Natural killer cell (primary cell): ENCODE measurements at regions of chr15 and their contacts with region 1.

Region 1: GRCh38 chr15:56886932-56887781 is 31.3 kb upstream of the TCF12 start:
- DNase-seq: peak; percentile 71 to 92
- ATAC-seq: peak; percentile 85 to 89 (median 89)
- H3K4me3 ChIP-seq: peak overlapping the region; percentile 85
- H3K4me3 Mint-ChIP-seq: peak overlapping the region; percentile 92
- H3K27ac ChIP-seq: peak overlapping the region; percentile 89
- H3K27ac Mint-ChIP-seq: peak overlapping the region; percentile 91 to 94
- H3K4me1 ChIP-seq: peaks cover 9% of the 10 kb centered on the region
- H3K4me1 Mint-ChIP-seq: peaks cover 15 to 22% of the 10 kb centered on the region in 2 donors
- H3K27me3 ChIP-seq: no peaks in the 10 kb centered on the region
- H3K27me3 Mint-ChIP-seq: no peaks in the 10 kb centered on the region
- CTCF ChIP-seq: no peak

Region 2: DNA sequence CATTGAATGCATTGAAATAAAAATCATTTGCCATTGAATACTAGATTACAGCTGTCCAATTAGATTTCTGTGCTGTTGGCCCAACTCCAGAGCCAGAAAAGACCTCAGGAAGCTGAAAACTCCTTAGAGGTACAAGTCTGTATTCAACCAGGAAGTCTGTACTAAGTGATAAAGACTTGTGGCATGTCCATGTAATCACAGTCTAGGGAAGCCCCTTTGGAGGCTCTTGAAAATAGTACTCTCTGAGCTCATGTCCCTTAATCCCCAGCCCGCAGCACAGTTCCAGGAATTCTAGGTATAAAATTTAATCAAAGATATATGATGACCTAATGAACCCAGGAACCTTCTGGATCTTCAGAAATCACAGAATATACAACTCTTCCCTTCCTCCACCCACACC is 1969.8 kb before region 1 on chr15:
- intact Hi-C with region 1: no loop called
- DNase-seq: no peak
- ATAC-seq: no peak
- H3K4me3 ChIP-seq: no peak overlapping the region
- H3K4me3 Mint-ChIP-seq: no peak overlapping the region
- H3K27ac ChIP-seq: no peak overlapping the region
- H3K27ac Mint-ChIP-seq: no peak overlapping the region
- H3K4me1 ChIP-seq: no peaks in the 10 kb centered on the region
- H3K4me1 Mint-ChIP-seq: no peaks in the 10 kb centered on the region
- H3K27me3 ChIP-seq: no peaks in the 10 kb centered on the region
- H3K27me3 Mint-ChIP-seq: no peaks in the 10 kb centered on the region
- CTCF ChIP-seq: no peak

Region 3: GRCh38 chr15:56918046-56918938 is 31.1 kb after region 1 on chr15 and contains the start of gene TCF12:
- intact Hi-C with region 1: loop called (anchors 1 kb)
- DNase-seq: peak; percentile 88 to 95
- ATAC-seq: peak; percentile 68 to 87 (median 71)
- H3K4me3 ChIP-seq: peak within 1 kb of the TSS; percentile 95
- H3K4me3 Mint-ChIP-seq: peak within 1 kb of the TSS; percentile 89
- H3K27ac ChIP-seq: peak within 1 kb of the TSS; percentile 92
- H3K27ac Mint-ChIP-seq: peak within 1 kb of the TSS; percentile 93 to 94
- H3K4me1 ChIP-seq: peaks cover 18% of the 10 kb centered on the region
- H3K4me1 Mint-ChIP-seq: peaks cover 32 to 40% of the 10 kb centered on the region in 2 donors
- H3K27me3 ChIP-seq: no peaks in the 10 kb centered on the region
- H3K27me3 Mint-ChIP-seq: no peaks in the 10 kb centered on the region
- CTCF ChIP-seq: peak; percentile 29
- total RNA-seq, gene TCF12: 84.1 to 111 (median 107) TPM